ENCODE measurements at regions of chr3 and their contacts with region 1.

Region 1: DNA sequence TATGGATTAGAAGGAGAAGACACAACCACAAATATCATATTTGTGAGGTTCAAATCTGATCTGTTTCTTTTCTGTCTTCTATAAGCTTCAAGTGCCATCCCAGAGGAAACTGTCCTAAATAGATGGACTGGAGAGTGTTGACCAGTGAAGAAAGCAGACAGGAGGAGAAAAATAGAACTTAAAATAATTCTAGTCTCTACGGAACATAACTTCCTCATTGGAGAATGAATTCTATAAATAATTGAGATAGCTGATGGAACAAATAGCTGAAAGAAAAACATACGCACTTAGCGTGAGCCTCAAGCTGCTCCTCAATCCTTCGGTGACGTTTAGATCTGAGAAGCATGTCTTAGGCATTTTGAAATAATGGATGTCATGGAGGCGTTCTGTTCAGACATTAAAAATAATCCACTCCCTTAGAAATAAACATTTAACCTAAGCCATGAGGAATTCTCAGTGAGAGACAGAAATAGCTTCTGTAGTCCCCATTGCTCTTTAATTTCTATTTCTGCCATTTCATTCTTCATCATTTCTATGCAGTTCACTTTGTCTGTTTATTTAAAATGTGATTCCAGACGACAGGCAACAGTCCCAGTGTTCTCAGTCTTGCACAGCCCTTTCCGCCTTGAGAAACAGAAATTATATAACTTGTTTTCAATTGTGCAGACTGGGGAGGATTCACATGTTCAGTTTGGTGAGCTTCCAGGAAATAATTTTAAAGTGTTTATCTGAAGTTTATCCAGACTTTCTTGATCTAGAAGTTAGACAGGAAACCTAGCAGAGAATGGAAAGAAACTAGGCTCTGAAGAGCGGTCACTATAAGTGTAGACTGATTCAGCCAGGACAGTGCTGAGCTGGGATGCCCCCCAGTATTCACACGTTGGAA is 97.3 kb downstream of the NR1D2 start:
- DNase-seq: no peak
- H3K4me3 ChIP-seq: peak overlapping the region; percentile 5 to 47
- H3K27ac ChIP-seq: peak overlapping the region; percentile 91 to 94
- H3K4me1 ChIP-seq: peaks cover 8 to 51% of the 10 kb centered on the region in 2 donors
- H3K27me3 ChIP-seq: no peaks in the 10 kb centered on the region
- CTCF ChIP-seq: no peak

Region 2: DNA sequence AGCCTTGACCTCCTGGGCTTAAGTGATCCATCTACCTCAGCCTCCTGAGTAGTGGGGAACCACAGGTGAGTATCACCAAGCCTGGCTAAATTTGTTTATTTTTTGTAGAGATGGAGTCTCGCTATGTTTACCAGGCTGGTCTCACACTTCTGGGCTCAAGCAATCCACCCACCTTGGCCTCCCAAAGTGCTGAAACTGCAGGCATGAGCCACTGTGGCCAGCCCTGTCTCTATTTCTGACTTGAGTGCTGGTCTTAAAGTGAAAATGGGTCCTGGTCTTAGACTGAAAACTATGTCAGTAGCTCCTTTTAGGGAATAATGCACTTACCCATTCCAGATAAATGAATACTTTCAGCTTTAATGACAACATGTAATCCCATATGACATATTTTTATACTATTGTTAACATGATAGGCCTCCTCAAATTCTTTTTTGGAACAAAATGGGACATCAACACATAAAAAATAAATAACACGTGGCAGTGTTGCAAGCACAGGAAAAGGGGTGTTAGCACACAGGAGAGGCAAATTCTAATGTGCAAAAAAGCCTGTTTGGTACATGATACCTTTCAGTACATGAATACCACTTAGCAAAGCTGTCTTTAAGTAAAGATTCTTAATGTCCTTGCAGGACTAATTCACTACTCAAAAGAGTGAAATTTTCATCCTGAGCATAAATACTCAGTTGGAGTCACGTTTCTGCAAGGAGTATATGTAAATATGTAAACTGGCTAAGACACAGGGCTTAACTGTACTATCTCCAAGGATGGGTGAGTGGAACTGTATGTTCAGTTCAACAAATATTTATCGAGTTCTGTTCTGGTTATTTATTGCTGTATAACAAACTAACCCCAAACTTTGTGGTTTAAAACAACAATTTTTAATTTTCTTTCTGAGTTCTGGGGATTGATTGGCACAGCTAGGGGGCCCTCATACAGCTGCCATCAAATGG is 97.3 kb after region 1 on chr3:
- intact Hi-C with region 1: loop called (anchors 5 kb)
- DNase-seq: no peak
- H3K4me3 ChIP-seq: no peak overlapping the region
- H3K27ac ChIP-seq: peak overlapping the region; percentile 63 to 64
- H3K4me1 ChIP-seq: peaks cover 0 to 17% of the 10 kb centered on the region in 2 donors
- H3K27me3 ChIP-seq: no peaks in the 10 kb centered on the region
- CTCF ChIP-seq: no peak

Region 3: DNA sequence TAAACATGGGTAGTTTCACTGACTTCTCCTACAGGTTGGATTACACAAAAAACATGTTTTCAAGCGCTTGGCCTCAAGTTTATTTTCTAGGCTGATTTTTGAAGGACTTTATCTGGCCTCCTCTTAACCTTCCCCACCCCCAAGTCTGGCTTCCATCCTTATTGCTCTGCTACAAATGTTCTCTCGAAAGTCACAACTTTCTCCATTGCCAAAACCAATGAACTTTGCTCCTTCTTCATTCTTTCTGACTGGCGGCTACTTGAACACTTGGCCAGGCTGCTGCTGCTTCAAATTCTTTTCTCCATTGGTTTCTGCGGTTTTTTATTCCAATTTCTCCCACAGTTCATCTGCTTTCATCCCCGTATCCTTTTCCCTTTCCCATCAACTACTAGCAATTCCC is 1515.7 kb after region 1 on chr3:
- intact Hi-C with region 1: no loop called
- DNase-seq: no peak
- H3K4me3 ChIP-seq: no peak overlapping the region
- H3K27ac ChIP-seq: peak overlapping the region in 1 of 2 donors; percentile 57
- H3K4me1 ChIP-seq: peaks cover 2 to 8% of the 10 kb centered on the region in 2 donors
- H3K27me3 ChIP-seq: no peaks in the 10 kb centered on the region
- CTCF ChIP-seq: no peak